ENCODE measurements at regions of chr19 and their contacts with region 1.

Region 1: DNA sequence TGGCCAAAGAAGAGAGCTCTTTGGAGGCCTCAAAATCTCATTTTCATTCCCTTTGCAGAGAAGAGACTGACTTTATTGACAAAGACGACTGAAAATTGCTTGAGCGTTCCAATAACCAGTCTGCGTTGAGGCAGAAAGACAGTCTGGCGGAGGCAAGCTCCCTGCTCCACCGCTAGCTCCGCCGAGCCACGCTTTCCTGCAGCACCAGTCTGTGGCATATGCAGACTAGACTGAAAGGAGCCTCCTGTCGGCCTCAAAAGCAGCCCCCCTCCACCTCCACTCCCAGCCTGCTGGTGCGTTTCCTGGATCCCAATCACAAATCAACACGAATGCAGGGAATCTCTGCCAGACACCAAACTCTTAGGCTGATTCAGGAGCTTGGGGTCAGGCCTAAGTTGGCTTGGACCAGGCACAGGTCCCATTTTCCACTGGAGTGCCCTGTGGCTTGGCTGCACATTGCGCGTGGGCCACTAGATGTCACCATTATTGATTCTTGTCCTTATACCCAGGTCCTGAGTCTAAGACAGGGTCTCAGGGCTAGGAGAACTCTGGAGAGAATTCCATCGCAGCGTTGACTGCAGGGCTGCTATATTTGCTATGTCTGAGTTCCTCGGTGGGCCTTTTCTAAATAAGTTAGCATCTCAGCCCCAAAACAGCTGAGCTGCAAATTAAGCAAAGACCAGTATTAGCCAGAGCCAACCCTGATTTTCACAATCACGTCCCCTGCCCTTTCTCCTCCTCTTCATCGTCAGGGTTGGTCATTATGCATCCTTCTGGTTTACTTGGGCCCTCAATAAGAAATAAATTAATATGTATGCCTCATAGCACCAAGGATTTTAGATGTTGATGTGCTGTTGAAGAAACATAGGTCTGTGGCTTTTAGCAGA is 5.2 kb upstream of the ZNF507 start:
- DNase-seq: peak; percentile 15 to 57 (median 39)
- H3K4me3 ChIP-seq: no peak overlapping the region
- H3K4me3 Mint-ChIP-seq: peak overlapping the region in 1 of 2 donors; percentile 86
- H3K27ac ChIP-seq: no peak overlapping the region
- H3K27ac Mint-ChIP-seq: no peak overlapping the region
- H3K4me1 ChIP-seq: peaks cover 0 to under 1% of the 10 kb centered on the region in 2 donors
- H3K4me1 Mint-ChIP-seq: no peaks in the 10 kb centered on the region
- H3K27me3 ChIP-seq: peaks cover 97 to 98% of the 10 kb centered on the region in 2 donors
- H3K27me3 Mint-ChIP-seq: peaks cover 97 to 99% (median 99%) of the 10 kb centered on the region in 3 donors
- CTCF ChIP-seq: peak; percentile 80

Region 2: GRCh38 chr19:32566246-32566830 is 226.1 kb after region 1 on chr19:
- intact Hi-C with region 1: loop called in 1 of 2 experiments (anchors 5 kb)
- DNase-seq: no peak
- H3K4me3 ChIP-seq: no peak overlapping the region
- H3K4me3 Mint-ChIP-seq: no peak overlapping the region
- H3K27ac ChIP-seq: no peak overlapping the region
- H3K27ac Mint-ChIP-seq: no peak overlapping the region
- H3K4me1 ChIP-seq: no peaks in the 10 kb centered on the region
- H3K4me1 Mint-ChIP-seq: peaks cover 3% of the 10 kb centered on the region
- H3K27me3 ChIP-seq: peaks cover 2 to 4% of the 10 kb centered on the region in 2 donors
- H3K27me3 Mint-ChIP-seq: peaks cover 19 to 36% (median 35%) of the 10 kb centered on the region in 3 donors
- CTCF ChIP-seq: no peak

Measured in CD14-positive monocyte (primary cell).